ENCODE measurements at regions of chr4 and their contacts with region 1.

Region 1: GRCh38 chr4:99024481-99025275 is 29.2 kb downstream of the METAP1 start:
- DNase-seq: peak in 1 of 2 donors; percentile 18
- ATAC-seq: peak in 1 of 3 donors; percentile 40
- H3K4me3 ChIP-seq: no peak overlapping the region
- H3K4me3 Mint-ChIP-seq: no peak overlapping the region
- H3K27ac ChIP-seq: no peak overlapping the region
- H3K27ac Mint-ChIP-seq: peak overlapping the region; percentile 57 to 86
- H3K4me1 ChIP-seq: no peaks in the 10 kb centered on the region
- H3K4me1 Mint-ChIP-seq: peaks cover 45 to 76% of the 10 kb centered on the region in 2 donors
- H3K27me3 ChIP-seq: no peaks in the 10 kb centered on the region
- H3K27me3 Mint-ChIP-seq: no peaks in the 10 kb centered on the region
- CTCF ChIP-seq: no peak

Region 2: DNA sequence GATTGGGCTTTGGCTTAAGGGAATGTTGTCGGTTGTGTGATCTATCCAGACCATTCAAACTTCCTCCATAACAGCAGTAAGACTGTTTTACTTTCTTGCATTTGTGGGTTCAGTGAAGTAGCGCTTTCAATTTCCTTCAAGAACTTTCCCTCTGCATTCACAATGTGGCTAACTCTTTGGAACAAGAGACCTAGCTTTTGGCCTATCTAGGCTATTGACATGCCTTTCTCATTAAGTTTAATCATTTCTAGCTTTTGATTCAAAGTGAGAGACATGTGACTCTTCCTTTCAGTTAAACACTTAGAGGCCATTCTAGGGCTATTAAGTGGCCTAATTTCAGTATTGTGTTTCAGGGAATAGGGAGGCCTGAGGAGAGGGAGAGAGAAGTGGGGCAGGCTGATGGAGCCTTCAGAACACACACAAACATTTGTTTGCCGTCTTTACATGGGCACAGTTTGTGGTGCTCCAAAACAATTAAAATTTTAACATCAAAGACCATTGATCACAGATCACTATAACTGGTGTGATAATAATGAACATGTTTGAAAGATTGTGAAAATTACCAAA is 29.8 kb after region 1 on chr4:
- intact Hi-C with region 1: loop called (anchors 2 kb)
- DNase-seq: no peak
- ATAC-seq: no peak
- H3K4me3 ChIP-seq: no peak overlapping the region
- H3K4me3 Mint-ChIP-seq: no peak overlapping the region
- H3K27ac ChIP-seq: no peak overlapping the region
- H3K27ac Mint-ChIP-seq: peak overlapping the region in 1 of 2 donors; percentile 47
- H3K4me1 ChIP-seq: no peaks in the 10 kb centered on the region
- H3K4me1 Mint-ChIP-seq: peaks cover 9 to 18% of the 10 kb centered on the region in 2 donors
- H3K27me3 ChIP-seq: no peaks in the 10 kb centered on the region
- H3K27me3 Mint-ChIP-seq: no peaks in the 10 kb centered on the region
- CTCF ChIP-seq: no peak